Colonic mucosa (tissue), 4 donors: ENCODE measurements at regions of chr2 and their contacts with region 1.

Region 1: DNA sequence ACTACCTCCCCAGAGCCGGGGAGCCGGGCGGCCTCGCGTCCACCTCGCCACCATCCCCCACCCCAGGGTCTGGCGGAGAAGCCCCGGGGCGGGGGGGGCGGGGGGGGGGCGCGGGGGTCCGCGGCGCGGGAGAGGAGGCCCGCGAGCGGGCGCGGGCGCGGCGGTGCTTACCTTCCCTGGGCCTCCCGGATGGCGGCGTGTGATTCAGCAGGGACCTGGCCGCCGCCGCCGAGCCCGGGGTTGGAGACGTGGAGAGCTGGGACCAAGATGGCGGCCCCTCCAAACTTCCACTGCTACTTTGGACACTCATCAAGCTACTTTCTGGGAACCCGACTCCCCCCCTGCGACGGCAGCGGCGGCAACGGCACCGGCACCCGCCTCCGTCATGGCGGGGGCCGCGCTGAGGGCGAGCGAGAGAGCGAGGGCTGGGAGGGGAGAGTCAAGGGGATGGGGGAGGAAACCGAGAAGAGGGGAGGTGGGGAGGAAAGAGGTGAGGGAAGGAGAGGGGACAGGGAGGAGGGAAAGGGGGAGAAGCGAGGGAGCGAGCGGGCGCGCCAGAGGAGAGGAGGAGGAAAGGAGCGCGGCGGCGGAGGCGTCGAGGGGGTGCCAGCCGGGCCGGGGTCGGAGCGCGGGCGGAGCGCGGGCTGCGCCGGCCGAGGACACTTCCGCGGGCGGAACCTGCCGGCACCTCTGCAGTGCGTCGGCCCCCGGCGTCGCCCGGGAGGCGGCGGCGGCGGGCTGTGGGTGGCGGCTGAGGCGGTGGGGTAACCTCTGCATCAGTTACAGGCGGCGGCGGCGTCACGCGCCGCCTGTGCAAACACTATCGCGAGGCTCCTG is at the start of gene TLK1:
- DNase-seq: peak; percentile 71
- H3K4me3 ChIP-seq: peak within 1 kb of the TSS; percentile 68
- H3K27ac ChIP-seq: peak within 1 kb of the TSS; percentile 92
- H3K4me1 ChIP-seq: no peaks in the 10 kb centered on the region
- H3K27me3 ChIP-seq: no peaks in the 10 kb centered on the region
- CTCF ChIP-seq: no peak
- total RNA-seq, gene TLK1: 69.5 to 82.8 TPM

Region 2: DNA sequence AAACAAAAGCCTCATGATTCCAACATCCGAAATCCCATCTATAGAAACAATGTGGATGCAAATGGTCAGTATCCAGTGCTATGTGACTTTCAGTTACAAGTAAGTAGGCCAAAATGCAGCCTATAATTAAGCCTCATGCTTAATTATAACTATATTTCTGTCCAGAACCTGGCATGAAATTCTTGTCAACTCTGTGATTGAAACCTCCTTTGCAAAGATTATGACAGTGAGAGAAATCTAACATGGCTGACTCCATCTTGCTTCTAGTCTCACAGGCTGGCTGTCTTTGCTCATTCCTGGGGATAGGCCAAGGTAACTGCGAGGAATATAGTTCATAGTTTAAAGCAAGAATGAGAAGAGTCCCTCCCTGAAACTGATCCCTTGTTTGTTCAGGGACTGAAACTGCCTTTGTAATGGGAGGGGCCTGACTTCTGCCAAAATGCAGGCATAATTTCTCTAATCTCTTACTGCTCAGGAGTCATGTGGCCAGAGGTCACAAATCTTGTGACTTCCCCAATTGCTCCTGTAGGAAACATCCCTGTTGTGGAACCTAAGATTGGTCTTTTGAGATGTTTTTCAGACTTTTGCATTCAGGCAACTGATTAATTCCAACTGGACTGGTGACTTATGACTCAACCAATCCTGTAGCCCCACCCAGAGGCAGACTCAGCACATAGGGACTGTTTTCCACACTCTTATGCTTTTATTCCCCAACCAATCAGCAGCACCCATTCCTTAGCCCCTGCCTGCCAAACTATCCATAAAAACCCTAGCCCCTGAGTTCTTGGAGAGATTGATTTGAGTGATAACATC is 84.8 kb after region 1 on chr2:
- intact Hi-C with region 1: no loop called
- DNase-seq: no peak
- H3K4me3 ChIP-seq: no peak overlapping the region
- H3K27ac ChIP-seq: no peak overlapping the region
- H3K4me1 ChIP-seq: no peaks in the 10 kb centered on the region
- H3K27me3 ChIP-seq: no peaks in the 10 kb centered on the region
- CTCF ChIP-seq: no peak

Region 3: GRCh38 chr2:171402906-171403580 is 242.7 kb after region 1 on chr2:
- intact Hi-C with region 1: no loop called
- DNase-seq: no peak
- H3K4me3 ChIP-seq: no peak overlapping the region
- H3K27ac ChIP-seq: no peak overlapping the region
- H3K4me1 ChIP-seq: no peaks in the 10 kb centered on the region
- H3K27me3 ChIP-seq: no peaks in the 10 kb centered on the region
- CTCF ChIP-seq: no peak

Region 4: GRCh38 chr2:171416009-171416926 is 255.9 kb after region 1 on chr2:
- intact Hi-C with region 1: loop called (anchors 5 kb)
- DNase-seq: peak; percentile 92
- H3K4me3 ChIP-seq: no peak overlapping the region
- H3K27ac ChIP-seq: no peak overlapping the region
- H3K4me1 ChIP-seq: no peaks in the 10 kb centered on the region
- H3K27me3 ChIP-seq: no peaks in the 10 kb centered on the region
- CTCF ChIP-seq: peak; percentile 77